ENCODE measurements at regions of chr6 and their contacts with region 1.

Region 1: DNA sequence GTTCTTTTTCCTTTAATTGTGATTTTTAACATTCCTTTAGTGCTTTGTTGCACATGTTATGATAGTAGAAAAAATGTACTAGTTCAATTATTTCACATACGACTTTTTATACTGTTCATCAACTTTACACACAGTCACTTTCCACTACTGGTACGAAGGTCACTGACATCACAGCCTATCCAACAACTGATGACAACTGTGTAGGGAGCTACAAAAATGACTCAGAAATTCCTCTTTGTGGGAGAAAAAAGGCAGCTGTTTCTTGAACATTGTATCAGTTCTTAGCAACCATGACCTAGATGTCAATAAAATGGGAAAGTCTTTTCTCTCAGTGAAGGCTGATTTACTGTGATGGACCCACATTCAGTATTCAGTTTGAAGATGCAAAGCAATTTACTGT is 7.0 kb upstream of the ID4 start:
- DNase-seq: no peak
- H3K4me3 ChIP-seq: no peak overlapping the region
- H3K4me3 Mint-ChIP-seq: no peak overlapping the region
- H3K27ac Mint-ChIP-seq: no peak overlapping the region
- H3K4me1 ChIP-seq: no peaks in the 10 kb centered on the region
- H3K4me1 Mint-ChIP-seq: no peaks in the 10 kb centered on the region
- H3K27me3 ChIP-seq: no peaks in the 10 kb centered on the region
- H3K27me3 Mint-ChIP-seq: peaks cover 4% of the 10 kb centered on the region
- CTCF ChIP-seq: no peak

Region 2: GRCh38 chr6:18784794-18785193 is 1045.4 kb before region 1 on chr6:
- CTCF ChIA-PET with region 1: interaction called, 10 read pairs
- POLR2A ChIA-PET with region 1: no interaction called
- intact Hi-C with region 1: no loop called
- DNase-seq: no peak
- H3K4me3 ChIP-seq: no peak overlapping the region
- H3K4me3 Mint-ChIP-seq: no peak overlapping the region
- H3K27ac Mint-ChIP-seq: no peak overlapping the region
- H3K4me1 ChIP-seq: no peaks in the 10 kb centered on the region
- H3K4me1 Mint-ChIP-seq: no peaks in the 10 kb centered on the region
- H3K27me3 ChIP-seq: no peaks in the 10 kb centered on the region
- H3K27me3 Mint-ChIP-seq: peaks cover 6% of the 10 kb centered on the region
- CTCF ChIP-seq: no peak

Region 3: DNA sequence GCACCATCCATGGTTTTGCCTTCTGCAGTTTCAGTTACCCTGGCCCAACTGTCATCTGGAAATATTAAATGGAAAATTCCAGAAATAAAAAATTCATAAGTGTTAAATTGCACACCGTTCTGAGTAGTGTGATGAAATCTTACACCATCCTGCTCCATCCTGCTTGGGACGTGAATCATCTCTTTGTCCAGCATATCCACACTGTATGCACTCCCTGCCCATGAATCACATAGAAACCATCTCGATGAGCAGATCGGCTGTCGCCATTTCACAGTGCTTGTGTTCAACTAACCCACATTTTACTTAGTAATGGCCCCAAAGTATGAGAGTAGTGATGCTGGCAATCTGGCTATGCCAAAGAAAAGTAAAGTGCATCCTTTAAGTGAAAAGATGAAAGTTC is 98.9 kb before region 1 on chr6:
- CTCF ChIA-PET with region 1: no interaction called
- POLR2A ChIA-PET with region 1: no interaction called
- intact Hi-C with region 1: no loop called
- DNase-seq: no peak
- H3K4me3 ChIP-seq: no peak overlapping the region
- H3K4me3 Mint-ChIP-seq: no peak overlapping the region
- H3K27ac Mint-ChIP-seq: no peak overlapping the region
- H3K4me1 ChIP-seq: no peaks in the 10 kb centered on the region
- H3K4me1 Mint-ChIP-seq: no peaks in the 10 kb centered on the region
- H3K27me3 ChIP-seq: no peaks in the 10 kb centered on the region
- H3K27me3 Mint-ChIP-seq: peaks cover 15% of the 10 kb centered on the region
- CTCF ChIP-seq: no peak

Region 4: DNA sequence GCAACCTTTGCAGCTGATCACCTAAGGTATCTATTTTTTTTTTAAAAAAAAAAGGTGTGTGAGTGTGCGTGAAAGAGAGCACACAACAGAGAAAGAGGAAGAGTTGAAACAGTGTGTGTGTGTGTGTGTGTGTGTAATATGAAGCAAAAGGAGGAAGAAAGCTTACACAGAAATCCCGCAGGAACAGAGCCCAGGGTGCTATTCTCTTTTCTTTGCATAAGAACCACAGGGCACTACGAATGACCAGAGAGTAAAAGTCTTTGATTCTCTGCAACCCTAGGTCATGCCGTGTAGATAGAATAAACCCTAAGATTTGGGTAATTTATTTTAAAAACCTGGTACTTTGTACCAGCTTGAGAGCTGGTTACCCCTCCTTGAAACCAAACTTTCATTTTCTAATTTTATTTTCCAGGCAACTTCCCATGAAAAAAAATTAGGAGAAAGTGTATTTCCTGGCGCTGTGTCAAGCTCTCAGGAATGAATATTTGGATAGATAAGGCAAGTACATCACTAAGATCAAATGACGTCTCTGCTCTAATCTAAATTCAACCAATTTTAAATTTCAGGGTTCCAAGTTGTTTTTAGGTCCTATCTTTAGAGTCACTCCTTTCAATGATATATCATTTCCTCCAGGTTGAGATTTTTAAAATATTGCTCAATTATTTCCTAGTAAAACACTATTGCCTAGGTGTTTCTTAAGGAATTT is 40.9 kb before region 1 on chr6:
- CTCF ChIA-PET with region 1: no interaction called
- POLR2A ChIA-PET with region 1: no interaction called
- intact Hi-C with region 1: no loop called
- DNase-seq: no peak
- H3K4me3 ChIP-seq: no peak overlapping the region
- H3K4me3 Mint-ChIP-seq: no peak overlapping the region
- H3K27ac Mint-ChIP-seq: no peak overlapping the region
- H3K4me1 ChIP-seq: no peaks in the 10 kb centered on the region
- H3K4me1 Mint-ChIP-seq: no peaks in the 10 kb centered on the region
- H3K27me3 ChIP-seq: no peaks in the 10 kb centered on the region; the same call in 1 of the 2 replicates
- H3K27me3 Mint-ChIP-seq: peaks cover 6% of the 10 kb centered on the region
- CTCF ChIP-seq: no peak

Measured in Caco-2 (cell line).